Right ventricle myocardium inferior (tissue), 1 donor: ENCODE measurements at regions of chr3 and their contacts with region 1.

Region 1: GRCh38 chr3:152183473-152183872 is 85.3 kb upstream of the MBNL1 start:
- DNase-seq: no peak
- ATAC-seq: peak; percentile 76

Region 2: DNA sequence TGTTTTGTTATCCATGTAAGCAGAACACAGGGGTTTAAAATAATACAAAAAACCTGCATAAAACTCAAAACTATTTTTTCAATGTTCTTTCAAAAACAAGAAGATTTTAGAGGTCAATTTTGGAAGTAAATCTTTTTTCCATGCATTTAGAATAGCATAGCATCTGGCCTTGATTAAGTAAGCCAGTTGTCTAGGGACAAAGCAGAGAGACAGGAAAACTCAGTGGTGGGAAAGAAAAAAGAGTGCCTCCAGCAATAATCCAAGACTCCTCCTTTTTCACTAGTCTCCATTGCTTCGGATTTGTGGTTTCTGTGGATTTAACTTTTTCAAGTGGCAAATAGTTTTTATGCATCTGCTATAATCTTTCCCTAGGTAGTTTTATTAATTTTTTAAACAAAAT is 221.1 kb before region 1 on chr3:
- intact Hi-C with region 1: no loop called
- DNase-seq: no peak
- ATAC-seq: no peak

Region 3: DNA sequence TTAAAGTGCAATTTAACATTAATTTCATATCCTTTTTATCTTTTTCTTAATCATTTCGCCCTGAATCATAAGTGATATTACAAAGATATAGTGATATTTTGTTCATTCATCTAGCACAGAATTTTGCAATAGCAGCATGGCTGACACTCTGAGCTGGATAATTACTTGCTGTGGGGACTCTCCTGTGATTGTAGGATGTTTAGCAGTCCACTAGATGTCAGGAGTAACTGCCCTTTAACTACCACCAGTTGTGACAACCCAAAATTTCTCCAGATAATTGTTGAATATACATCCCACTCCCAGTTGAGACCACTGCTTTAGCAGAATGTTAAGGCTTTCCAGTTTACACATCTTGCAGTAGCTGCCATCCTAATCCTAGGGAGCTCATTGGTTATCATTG is 111.5 kb before region 1 on chr3:
- intact Hi-C with region 1: loop called (anchors 10 kb)
- DNase-seq: no peak
- ATAC-seq: no peak